ENCODE measurements at regions of chr2 and their contacts with region 1.

Region 1: DNA sequence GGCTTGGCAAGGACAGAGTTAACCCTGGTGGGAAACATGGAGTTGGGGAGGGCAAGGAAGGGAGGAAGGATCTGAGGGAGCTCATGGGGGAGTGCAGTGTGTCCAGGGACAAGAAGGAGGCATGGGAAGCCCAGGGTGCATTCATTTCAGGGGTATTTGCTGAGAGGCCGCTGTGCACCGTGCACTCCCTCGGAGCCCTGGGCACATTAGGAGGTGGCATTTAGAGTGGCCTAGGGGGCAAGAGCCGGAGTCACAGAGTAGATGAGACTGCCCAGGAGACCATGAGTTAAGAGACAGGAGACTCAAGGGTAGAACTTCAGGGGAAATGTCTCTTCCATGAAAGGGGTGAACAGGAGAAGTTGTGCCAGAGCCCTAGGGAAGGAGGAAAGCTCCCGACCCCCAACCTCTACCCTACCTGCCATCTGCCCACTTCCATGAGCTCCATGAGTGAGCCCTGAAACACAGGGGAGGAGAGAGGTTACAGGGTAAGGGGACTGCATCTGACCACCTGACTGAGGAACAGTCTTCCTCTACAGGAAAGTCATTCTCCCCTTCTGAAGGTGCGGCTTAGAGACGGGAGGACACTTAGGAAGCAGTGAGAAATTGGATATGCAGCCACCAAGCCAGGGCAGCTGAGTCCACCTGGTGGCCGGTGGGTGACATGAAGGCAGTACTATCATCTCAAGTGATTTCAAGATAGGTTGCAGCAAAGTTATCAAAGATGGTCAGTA is 58.5 kb upstream of the COPS8 start:
- DNase-seq: peak; percentile 86
- H3K4me3 ChIP-seq: no peak overlapping the region
- H3K27ac ChIP-seq: peak overlapping the region in 1 of 8 donors; percentile 37
- H3K4me1 ChIP-seq: peaks cover 0 to 13% (median 4%) of the 10 kb centered on the region in 6 donors
- H3K27me3 ChIP-seq: no peaks in the 10 kb centered on the region
- CTCF ChIP-seq: peak; percentile 47 to 86 (median 73)
- POLR2A ChIP-seq: no peak

Region 2: GRCh38 chr2:236711440-236711839 is 315.7 kb before region 1 on chr2:
- intact Hi-C with region 1: loop called (anchors 10 kb)
- DNase-seq: peak; percentile 43
- H3K4me3 ChIP-seq: no peak overlapping the region
- H3K27ac ChIP-seq: peak overlapping the region in 3 of 8 donors; percentile 14 to 48 (median 17)
- H3K4me1 ChIP-seq: peaks cover 0 to 42% (median 18%) of the 10 kb centered on the region in 6 donors
- H3K27me3 ChIP-seq: peaks cover 0 to 18% (median 0%) of the 10 kb centered on the region in 7 donors
- CTCF ChIP-seq: no peak
- POLR2A ChIP-seq: no peak

Region 3: DNA sequence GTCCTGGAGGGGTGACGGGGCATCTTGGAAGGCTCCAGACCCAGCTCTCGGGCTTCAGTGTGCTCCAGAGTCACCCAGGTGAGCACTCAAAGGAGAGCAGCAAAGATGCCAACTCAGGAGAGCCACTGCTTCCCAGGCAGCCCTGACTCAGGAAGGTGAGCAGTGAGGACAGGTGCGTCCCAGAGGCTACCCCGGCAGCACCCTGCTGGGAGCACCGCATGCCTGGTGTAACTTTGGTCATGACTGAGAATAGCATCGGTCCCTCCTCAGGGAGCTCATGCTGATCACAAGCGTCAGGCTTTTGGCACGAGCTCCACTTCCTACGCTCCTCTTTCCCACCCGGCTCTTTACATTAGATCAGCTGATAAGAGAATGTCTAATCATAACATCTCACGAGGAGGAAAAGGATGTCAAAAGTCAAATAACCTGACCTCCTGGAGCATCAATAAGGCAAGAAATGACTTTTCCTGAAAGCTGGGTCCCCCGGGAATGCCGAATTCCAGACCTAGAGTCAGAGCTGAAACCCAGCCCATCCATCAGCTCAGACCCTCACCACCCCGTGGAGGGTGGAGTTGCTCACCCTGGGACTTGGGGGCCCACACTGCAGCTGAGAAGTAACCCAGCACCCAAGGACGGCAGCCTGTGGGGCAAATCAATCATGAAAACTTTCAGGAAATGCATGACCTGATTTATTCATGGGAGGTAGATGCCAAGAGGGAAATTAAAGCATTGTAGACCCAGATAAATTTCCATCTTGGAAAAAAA is 208.7 kb before region 1 on chr2:
- intact Hi-C with region 1: no loop called
- DNase-seq: no peak
- H3K4me3 ChIP-seq: no peak overlapping the region
- H3K27ac ChIP-seq: no peak overlapping the region
- H3K4me1 ChIP-seq: no peaks in the 10 kb centered on the region
- H3K27me3 ChIP-seq: peaks cover 0 to 4% (median 0%) of the 10 kb centered on the region in 7 donors
- CTCF ChIP-seq: no peak
- POLR2A ChIP-seq: no peak

Measured in spleen (tissue), 13 donors.